Ascending aorta (tissue), 2 donors: ENCODE measurements at regions of chr19 and their contacts with region 1.

Region 1: DNA sequence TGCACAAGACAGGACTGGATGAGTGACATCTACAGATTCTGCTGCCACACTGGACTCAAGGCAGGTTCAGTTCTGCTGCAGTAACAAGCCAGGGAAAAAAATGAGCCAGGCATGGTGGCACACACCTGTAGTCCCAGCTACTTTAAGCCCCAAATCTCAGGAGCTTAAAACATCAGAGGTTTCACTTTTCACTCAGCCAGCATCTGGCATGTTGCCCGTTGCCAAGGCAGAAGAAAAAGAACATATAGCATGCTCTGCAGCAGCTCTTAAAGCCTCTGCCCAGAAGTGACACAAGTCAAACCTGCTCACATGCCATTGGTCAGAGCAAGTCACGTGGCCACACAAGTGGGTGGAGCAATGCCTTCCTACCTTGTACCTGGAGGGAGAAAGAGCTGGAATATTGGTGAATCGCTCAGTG is 14.7 kb upstream of the ADGRE5 start:
- DNase-seq: peak; percentile 43 to 82
- H3K4me3 ChIP-seq: no peak overlapping the region
- H3K27ac ChIP-seq: no peak overlapping the region
- H3K4me1 ChIP-seq: peaks cover 16 to 42% of the 10 kb centered on the region in 2 donors
- H3K27me3 ChIP-seq: no peaks in the 10 kb centered on the region
- CTCF ChIP-seq: no peak

Region 2: GRCh38 chr19:12777217-12778016 is 1589.1 kb before region 1 on chr19:
- intact Hi-C with region 1: loop called (anchors 5 kb)
- DNase-seq: peak; percentile 43 to 89
- H3K4me3 ChIP-seq: peak overlapping the region; percentile 68 to 70
- H3K27ac ChIP-seq: peak overlapping the region; percentile 93 to 96
- H3K4me1 ChIP-seq: peaks cover 21 to 49% of the 10 kb centered on the region in 2 donors
- H3K27me3 ChIP-seq: no peaks in the 10 kb centered on the region
- CTCF ChIP-seq: peak; percentile 97 to 98 (median 98)

Region 3: DNA sequence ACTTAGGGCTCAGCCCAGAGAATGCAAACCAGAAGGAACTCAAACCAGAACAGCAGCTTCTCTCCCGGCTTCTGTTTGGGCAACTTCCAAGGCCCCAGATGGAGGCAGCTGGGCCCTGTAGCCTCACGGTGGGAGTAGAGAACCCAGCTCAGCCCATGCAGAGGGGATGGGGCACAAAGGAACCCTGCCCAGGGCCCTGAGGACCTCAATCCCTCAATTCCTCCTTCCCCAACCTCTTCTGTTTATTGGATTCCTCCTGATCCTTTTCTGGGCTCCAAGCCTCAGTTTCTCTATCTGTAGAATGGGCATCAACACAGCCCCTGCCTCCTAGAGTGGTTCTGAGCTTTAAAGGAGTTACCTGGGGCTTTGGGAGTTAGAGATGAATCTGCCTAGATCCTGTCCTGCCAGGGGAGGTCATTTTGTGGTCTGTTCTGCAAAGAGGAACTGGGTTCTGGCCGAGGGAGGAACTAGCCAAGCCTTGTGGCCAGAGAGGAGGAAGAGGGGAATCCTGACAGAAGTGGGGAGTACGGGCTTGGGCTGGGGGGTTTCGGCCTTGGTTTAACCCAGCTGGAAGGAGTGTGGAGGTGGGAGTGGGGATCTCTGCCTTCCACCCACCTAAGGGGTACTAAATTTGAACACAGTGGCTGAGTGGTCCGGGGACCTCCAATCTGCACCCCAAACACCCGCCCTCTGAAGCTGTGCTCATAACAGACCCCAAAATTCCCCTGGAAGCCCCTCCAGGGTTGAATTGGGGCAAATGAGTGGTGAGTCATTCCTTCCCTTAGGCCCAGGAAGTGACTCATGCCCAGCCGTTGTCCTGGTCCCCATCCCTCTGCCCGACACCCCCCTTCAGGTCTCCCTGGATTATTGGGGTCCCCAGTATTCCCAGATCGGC is 17.4 kb after region 1 on chr19:
- intact Hi-C with region 1: loop called (anchors 1 kb)
- DNase-seq: no peak
- H3K4me3 ChIP-seq: peak overlapping the region; percentile 71 to 92
- H3K27ac ChIP-seq: peak overlapping the region; percentile 96 to 97
- H3K4me1 ChIP-seq: peaks cover 3 to 32% of the 10 kb centered on the region in 2 donors
- H3K27me3 ChIP-seq: no peaks in the 10 kb centered on the region
- CTCF ChIP-seq: no peak

Region 4: DNA sequence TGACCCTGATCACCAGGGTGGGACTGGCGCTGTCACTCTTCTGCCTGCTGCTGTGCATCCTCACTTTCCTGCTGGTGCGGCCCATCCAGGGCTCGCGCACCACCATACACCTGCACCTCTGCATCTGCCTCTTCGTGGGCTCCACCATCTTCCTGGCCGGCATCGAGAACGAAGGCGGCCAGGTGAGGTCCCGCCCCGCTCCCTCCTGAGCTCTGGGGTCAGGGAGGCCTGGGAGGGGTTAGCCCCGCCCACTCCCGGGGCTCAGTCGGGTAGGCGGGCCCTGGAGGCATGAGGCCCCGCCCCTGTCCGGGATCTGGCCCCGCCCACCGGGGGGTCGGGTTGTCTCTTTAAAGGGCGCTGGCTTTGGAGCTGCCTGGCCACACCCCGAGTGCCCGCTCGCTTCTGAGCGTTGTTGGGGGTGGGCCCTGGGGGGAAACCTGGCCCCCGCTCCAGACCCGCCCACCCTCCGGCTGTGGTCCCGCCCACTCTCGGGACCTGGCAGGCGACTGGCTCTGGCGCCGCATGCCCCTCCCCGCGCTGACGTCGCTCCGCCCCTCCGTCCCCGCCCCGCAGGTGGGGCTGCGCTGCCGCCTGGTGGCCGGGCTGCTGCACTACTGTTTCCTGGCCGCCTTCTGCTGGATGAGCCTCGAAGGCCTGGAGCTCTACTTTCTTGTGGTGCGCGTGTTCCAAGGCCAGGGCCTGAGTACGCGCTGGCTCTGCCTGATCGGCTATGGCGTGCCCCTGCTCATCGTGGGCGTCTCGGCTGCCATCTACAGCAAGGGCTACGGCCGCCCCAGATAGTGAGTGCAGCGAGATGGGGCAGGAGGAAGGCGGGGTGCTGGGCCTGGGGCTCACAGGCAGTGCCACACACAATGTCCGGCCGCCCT is 39.5 kb after region 1 on chr19:
- intact Hi-C with region 1: loop called (anchors 1 kb)
- DNase-seq: peak; percentile 31 to 89
- H3K4me3 ChIP-seq: no peak overlapping the region
- H3K27ac ChIP-seq: peak overlapping the region; percentile 71 to 75
- H3K4me1 ChIP-seq: peaks cover 2 to 8% of the 10 kb centered on the region in 2 donors
- H3K27me3 ChIP-seq: no peaks in the 10 kb centered on the region
- CTCF ChIP-seq: peak; percentile 90 to 97 (median 94)

Region 5: DNA sequence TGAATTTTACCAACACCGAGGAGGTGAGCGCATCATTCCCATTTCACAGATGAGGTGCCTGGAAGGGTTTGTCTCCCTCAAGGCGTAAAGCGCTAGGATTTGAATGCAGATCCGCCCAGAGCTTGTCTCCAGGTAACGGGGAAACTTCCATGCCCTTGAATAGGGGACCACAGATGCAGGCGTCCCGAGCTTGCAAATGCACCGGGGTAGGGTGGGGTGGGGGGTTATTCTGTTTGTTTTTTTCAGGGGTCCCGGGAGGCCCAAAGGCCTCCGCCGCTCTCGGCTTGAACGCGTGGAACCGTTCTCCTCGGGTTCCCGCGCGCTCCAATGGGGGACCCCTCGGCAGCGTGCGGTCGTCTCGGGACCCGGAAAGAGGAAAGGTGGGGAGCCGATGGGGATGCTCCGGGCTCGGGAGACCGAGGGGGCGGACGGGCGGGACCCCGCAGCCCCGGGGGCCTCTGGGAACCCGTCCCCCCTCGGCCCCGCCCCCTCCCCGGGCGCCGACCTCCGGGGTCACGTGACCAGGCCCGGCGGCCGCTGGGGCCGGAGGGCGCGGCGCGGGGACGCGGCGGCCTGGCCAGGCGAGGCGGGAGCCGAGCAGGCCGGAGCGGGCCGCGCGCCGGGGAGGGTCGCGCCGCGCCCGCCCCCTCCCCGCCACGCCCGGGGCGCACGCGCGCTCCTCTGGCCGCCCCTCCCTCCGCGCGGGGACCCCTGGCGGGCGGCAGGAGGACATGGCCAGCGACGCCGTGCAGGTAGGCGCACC is 66.5 kb after region 1 on chr19 and contains the start of gene PKN1:
- intact Hi-C with region 1: loop called (anchors 2 kb)
- DNase-seq: no peak
- H3K4me3 ChIP-seq: peak within 1 kb of the TSS; percentile 77 to 98
- H3K27ac ChIP-seq: peak within 1 kb of the TSS; percentile 78 to 82
- H3K4me1 ChIP-seq: peaks cover 3 to 19% of the 10 kb centered on the region in 2 donors
- H3K27me3 ChIP-seq: no peaks in the 10 kb centered on the region
- CTCF ChIP-seq: peak in 1 of 3 experiments; percentile 10
- total RNA-seq, gene PKN1: 231 TPM

Region 6: DNA sequence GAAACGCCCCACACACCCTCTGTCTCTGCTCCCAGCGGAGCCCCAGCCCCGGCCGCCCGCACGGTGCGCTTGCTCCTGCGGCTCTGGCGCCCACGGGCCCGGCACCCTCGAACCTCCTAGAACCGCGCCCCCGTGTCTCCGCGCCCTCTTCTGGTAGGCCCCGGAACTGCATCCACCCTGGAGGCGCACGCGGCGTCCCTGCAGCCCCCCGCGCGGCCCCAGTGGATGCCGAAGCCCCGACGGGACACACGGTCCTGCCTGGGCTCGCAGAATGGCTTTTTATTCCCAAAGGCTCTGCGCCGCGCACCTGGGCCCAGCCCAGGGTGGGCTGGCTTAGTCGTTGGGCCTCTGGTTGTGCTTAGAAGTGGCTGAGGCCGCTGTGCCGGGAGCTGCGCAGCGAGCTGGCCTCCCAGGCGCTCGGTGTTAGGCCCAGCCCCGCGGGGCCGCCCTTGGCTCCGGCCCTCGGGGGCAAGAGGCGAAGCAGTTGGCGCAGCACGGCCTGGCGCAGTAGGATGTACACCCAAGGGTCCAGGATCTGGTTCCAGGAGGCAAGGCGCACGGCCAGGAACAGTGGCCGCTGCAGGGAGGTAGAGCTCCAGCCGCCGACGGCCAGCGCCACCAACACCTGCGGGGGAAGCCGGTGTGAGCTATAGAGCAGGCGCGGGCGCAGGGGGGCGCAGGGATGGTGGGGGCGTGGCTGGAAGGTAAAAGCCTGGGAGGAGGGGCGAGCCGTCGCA is 105.9 kb after region 1 on chr19:
- intact Hi-C with region 1: loop called (anchors 5 kb)
- DNase-seq: peak in 1 of 2 donors; percentile 79
- H3K4me3 ChIP-seq: peak overlapping the region; percentile 27 to 34
- H3K27ac ChIP-seq: no peak overlapping the region
- H3K4me1 ChIP-seq: peaks cover 8 to 21% of the 10 kb centered on the region in 2 donors
- H3K27me3 ChIP-seq: peaks cover 4% of the 10 kb centered on the region
- CTCF ChIP-seq: peak; percentile 94 to 100 (median 99)